ENCODE measurements at regions of chr12 and their contacts with region 1.

Region 1: GRCh38 chr12:66409195-66409871 is 107.0 kb downstream of the HELB start:
- DNase-seq: peak; percentile 20
- H3K4me3 Mint-ChIP-seq: no peak overlapping the region
- H3K27ac Mint-ChIP-seq: no peak overlapping the region
- H3K4me1 Mint-ChIP-seq: no peaks in the 10 kb centered on the region
- H3K27me3 Mint-ChIP-seq: peaks cover 21% of the 10 kb centered on the region

Region 2: DNA sequence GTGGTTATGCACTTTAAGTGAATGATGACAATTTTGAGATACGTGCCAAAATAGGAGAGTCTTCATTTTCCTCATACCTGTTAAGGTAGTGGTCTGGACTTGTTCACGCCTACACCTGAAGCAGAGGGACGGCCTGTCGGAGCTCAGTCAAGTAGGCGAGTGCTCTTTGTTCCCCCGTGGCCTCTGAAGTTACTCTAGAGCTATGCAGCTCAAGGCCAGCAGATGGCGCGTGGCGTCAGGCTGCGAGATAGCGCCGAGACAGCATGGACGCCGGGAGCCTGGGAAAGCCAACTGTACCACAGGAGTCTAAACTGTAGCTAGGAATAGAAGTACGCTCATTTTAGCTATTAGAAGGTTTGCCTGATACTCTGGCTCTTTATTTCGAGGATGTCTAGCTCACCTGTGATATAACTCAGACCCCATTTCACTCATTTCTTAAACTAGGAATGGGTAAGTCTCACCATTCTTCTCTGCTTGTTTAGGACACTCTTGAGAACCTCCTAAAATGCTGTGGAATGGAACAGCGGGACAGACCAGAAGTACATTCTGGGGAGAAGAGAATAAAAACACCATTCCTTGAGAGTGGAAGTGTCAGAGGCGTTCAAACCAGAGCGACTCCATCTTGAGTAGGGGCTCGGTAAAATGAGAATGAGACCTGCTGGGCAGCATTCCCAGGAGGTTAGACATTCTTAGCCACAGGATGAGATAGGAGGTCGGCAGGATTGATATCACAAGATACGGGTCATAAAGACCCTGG is 852.5 kb before region 1 on chr12:
- intact Hi-C with region 1: loop called (anchors 5 kb)
- DNase-seq: peak; percentile 23
- H3K4me3 Mint-ChIP-seq: no peak overlapping the region
- H3K27ac Mint-ChIP-seq: no peak overlapping the region
- H3K4me1 Mint-ChIP-seq: peaks cover 7% of the 10 kb centered on the region
- H3K27me3 Mint-ChIP-seq: peaks cover 9% of the 10 kb centered on the region

Region 3: DNA sequence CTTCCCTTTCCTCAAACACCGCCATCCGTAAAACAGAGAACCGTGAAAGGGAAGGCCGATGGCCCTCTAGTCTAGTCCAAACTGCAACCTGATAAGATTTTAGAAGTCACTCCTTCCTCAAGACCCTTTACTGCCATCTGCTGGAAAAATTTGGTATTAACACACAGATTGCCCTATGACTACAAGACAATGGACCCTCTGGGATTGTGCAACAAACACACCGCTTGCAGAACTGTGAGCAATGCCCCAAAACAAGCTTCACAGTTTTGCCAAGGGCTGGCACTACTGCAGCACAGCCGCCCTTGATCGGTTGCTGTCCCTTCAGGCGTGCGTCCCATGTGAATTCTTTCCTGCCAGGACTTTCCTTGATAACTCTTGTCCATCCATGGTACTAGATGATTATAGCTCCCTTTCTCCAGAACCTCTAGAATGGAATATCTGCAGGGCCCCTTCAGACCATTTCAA is 301.9 kb before region 1 on chr12:
- intact Hi-C with region 1: loop called (anchors 1 kb)
- DNase-seq: peak; percentile 43
- H3K4me3 Mint-ChIP-seq: no peak overlapping the region
- H3K27ac Mint-ChIP-seq: no peak overlapping the region
- H3K4me1 Mint-ChIP-seq: peaks cover 16% of the 10 kb centered on the region
- H3K27me3 Mint-ChIP-seq: peaks cover 14% of the 10 kb centered on the region

Region 4: GRCh38 chr12:66144791-66145754 is 264.3 kb before region 1 on chr12:
- intact Hi-C with region 1: loop called (anchors 1 kb)
- DNase-seq: no peak
- H3K4me3 Mint-ChIP-seq: no peak overlapping the region
- H3K27ac Mint-ChIP-seq: peak overlapping the region; percentile 58
- H3K4me1 Mint-ChIP-seq: peaks cover 21% of the 10 kb centered on the region
- H3K27me3 Mint-ChIP-seq: no peaks in the 10 kb centered on the region

Region 5: GRCh38 chr12:66269757-66270383 is 139.5 kb before region 1 on chr12:
- intact Hi-C with region 1: loop called (anchors 1 kb)
- DNase-seq: peak; percentile 8
- H3K4me3 Mint-ChIP-seq: no peak overlapping the region
- H3K27ac Mint-ChIP-seq: no peak overlapping the region
- H3K4me1 Mint-ChIP-seq: peaks cover 3% of the 10 kb centered on the region
- H3K27me3 Mint-ChIP-seq: no peaks in the 10 kb centered on the region

Region 6: GRCh38 chr12:66279123-66279712 is 130.1 kb before region 1 on chr12:
- intact Hi-C with region 1: loop called (anchors 1 kb)
- DNase-seq: peak; percentile 22
- H3K4me3 Mint-ChIP-seq: no peak overlapping the region
- H3K27ac Mint-ChIP-seq: no peak overlapping the region
- H3K4me1 Mint-ChIP-seq: peaks cover 40% of the 10 kb centered on the region
- H3K27me3 Mint-ChIP-seq: peaks cover 1% of the 10 kb centered on the region

Region 7: DNA sequence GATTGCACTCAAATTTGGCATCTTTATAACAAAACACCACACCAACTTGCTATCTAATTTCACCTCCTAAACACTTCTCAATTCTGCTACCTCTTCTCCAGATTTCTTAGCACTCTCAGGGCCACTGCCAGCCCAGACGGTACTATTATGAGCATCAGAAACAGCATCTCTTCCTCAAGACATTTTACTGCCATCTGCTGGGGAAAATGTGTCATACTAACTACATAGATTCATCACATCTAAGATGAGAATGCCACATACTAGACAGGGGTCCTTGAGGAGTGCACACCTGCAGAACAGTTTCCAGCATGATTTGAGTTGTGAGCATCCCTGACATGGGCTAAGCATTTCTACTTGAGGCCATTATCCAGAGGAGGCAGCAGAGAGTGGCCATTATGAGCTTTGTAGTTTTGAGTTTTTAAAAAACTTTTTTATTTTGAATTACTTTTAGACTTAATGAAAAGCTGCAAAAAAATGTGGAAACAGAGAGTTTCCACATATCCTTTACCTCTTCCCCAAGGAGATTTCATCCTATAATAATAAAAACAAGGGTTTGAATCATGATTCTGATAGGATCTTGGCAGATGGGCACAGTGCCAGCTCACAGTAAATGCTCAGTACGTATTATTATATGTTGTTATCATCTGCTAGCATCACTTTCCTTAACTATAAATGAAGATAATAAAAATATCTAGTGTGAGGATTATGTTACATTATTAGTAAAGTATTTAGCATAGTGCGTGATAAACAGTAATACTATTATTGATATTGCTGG is 284.8 kb after region 1 on chr12:
- intact Hi-C with region 1: loop called (anchors 10 kb)
- DNase-seq: no peak
- H3K4me3 Mint-ChIP-seq: no peak overlapping the region
- H3K27ac Mint-ChIP-seq: no peak overlapping the region
- H3K4me1 Mint-ChIP-seq: no peaks in the 10 kb centered on the region
- H3K27me3 Mint-ChIP-seq: peaks cover 14% of the 10 kb centered on the region

Measured in activated T-helper 1 cell treated with anti-CD3 and anti-CD28 coated beads, Interleukin-12 subunit alpha, Interleukin-12 subunit beta, Interleukin-2, Interleukin-4 antibody, amounts not matched to agents 30 ng/mL and 10 ng/mL and 1 ng/mL, durations not matched to agents 14 hours and 24 hours and 36 hours (primary cell).